Ovary (tissue), 10 donors: ENCODE measurements at regions of chr6 and their contacts with region 1.

Region 1: DNA sequence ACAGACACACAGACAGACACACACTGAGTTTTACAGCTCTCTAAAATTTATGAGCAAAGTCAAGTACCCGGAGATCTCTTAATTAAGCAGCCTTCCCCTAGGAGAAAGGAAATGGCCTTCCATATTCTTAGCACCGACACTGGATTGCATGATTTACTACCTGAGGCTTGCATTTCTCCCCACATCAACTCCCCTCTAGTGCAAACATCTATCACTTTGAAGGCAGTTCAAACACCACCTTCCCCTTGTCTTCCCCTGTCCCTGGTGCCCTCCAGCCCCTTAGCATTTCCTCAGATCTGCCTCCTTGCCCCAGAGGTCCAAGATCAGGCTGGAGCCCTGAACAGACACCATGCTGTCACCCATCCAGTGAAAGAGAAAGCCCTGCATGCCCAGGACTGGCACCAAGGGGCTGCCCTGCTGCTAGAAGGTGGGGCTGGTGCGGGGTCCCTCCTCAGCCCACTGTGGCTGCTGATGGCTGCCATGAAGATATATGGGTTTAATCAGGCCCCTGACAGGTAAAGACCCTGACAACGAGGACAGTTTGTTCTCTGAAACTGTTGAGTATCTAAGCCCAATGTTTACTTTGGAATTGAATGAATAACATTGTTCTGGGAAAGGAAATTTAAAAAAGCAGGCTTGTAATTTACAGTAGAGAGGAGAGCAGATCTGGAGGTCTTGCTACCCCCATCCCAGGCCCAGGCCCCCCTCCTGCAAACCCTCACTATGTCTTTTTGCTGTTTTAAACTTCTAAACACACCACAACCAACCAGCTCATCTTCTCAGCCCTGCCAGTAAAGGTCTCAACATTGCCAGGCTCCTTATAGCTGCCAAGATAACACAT is 171.1 kb downstream of the CDC5L start:
- DNase-seq: no peak
- H3K4me3 ChIP-seq: no peak overlapping the region
- H3K27ac ChIP-seq: no peak overlapping the region
- H3K4me1 ChIP-seq: peaks cover 9% of the 10 kb centered on the region
- H3K27me3 ChIP-seq: no peaks in the 10 kb centered on the region
- CTCF ChIP-seq: no peak
- EP300 ChIP-seq: no peak
- POLR2A ChIP-seq: no peak

Region 2: DNA sequence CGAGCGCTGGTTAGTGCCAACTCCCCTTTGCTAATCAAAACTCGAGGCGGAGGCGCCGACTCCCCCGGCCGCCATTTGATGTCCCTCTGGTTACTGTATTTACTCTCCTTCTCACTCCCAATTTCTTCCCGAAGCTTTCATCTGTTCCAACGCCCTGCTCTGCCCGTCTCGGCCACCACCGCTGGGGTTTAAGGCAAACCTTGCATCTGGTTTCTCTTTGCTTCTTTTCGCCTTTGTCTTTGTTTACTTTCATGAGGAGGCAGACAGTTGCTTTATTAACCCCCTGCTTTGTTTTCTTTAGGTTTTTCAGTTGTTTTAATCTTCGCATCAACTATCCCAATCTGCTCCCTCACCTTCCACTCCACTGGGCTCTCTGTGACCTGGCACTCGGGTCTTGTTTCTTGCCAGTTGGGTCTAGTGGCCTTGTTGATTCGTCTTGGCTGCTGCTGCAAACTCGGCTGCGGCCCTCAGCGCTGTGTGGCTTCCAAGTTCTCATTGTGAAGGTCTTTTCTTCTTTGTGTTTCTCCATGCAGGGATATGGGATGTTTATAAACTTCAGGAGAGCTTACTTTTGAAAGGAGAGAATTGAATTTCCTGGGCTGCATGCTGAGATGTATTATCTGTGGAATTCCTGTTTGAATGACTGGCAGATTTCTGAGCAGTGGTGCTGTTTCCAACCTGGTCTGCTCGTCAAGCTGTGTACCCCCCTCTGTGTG is 16.1 kb before region 1 on chr6:
- intact Hi-C with region 1: loop called in 1 of 4 experiments (anchors 2 kb)
- DNase-seq: peak in 3 of 5 donors; percentile 17 to 58 (median 43)
- H3K4me3 ChIP-seq: no peak overlapping the region
- H3K27ac ChIP-seq: peak overlapping the region; percentile 3 to 67
- H3K4me1 ChIP-seq: peaks cover 4% of the 10 kb centered on the region
- H3K27me3 ChIP-seq: no peaks in the 10 kb centered on the region
- CTCF ChIP-seq: no peak
- EP300 ChIP-seq: no peak
- POLR2A ChIP-seq: no peak